ENCODE measurements at regions of chrX and their contacts with region 1.

Region 1: GRCh38 chrX:31136144-31136611 is 64.3 kb upstream of the FTHL17 start:
- DNase-seq: peak; percentile 88
- H3K4me3 ChIP-seq: peak overlapping the region; percentile 54
- H3K27ac ChIP-seq: peak overlapping the region; percentile 100
- H3K4me1 ChIP-seq: peaks cover 44% of the 10 kb centered on the region
- CTCF ChIP-seq: no peak

Region 2: GRCh38 chrX:31099536-31100090 is 36.6 kb before region 1 on chrX:
- CTCF ChIA-PET with region 1: no interaction called
- POLR2A ChIA-PET with region 1: no interaction called
- intact Hi-C with region 1: no loop called
- DNase-seq: no peak
- H3K4me3 ChIP-seq: no peak overlapping the region
- H3K27ac ChIP-seq: no peak overlapping the region
- H3K4me1 ChIP-seq: no peaks in the 10 kb centered on the region
- CTCF ChIP-seq: no peak

Region 3: GRCh38 chrX:31178064-31178768 is 42.0 kb after region 1 on chrX:
- CTCF ChIA-PET with region 1: no interaction called
- POLR2A ChIA-PET with region 1: interaction called, 8 read pairs
- intact Hi-C with region 1: loop called (anchors 2 kb)
- DNase-seq: peak; percentile 28
- H3K4me3 ChIP-seq: no peak overlapping the region
- H3K27ac ChIP-seq: peak overlapping the region; percentile 67
- H3K4me1 ChIP-seq: peaks cover 60% of the 10 kb centered on the region
- CTCF ChIP-seq: no peak

Region 4: GRCh38 chrX:31217084-31217483 is 80.9 kb after region 1 on chrX:
- CTCF ChIA-PET with region 1: no interaction called
- POLR2A ChIA-PET with region 1: no interaction called
- intact Hi-C with region 1: no loop called
- DNase-seq: no peak
- H3K4me3 ChIP-seq: no peak overlapping the region
- H3K27ac ChIP-seq: peak overlapping the region; percentile 53
- H3K4me1 ChIP-seq: peaks cover 37% of the 10 kb centered on the region
- CTCF ChIP-seq: no peak

Region 5: DNA sequence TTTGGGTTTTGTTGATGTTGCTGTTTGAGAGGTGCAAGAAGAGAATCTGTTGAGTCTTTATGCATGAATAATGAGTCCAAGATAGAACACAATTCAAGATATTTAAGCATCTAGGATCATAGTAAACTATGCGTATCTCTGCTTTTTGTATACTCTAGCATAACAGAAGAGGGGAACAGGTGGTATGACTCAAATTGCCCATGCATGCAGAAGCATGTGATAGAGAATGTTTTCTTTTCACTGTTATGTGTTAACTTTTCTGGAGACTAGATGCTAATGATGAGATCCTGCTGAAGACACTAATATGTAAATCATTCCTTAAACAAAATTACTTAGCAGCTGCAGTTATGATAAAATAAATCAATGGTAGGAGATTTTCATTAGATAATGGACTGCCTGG is 101.0 kb after region 1 on chrX:
- CTCF ChIA-PET with region 1: no interaction called
- POLR2A ChIA-PET with region 1: interaction called, 4 read pairs
- intact Hi-C with region 1: loop called (anchors 10 kb)
- DNase-seq: peak; percentile 41
- H3K4me3 ChIP-seq: peak overlapping the region; percentile 43
- H3K27ac ChIP-seq: peak overlapping the region; percentile 90
- H3K4me1 ChIP-seq: peaks cover 99% of the 10 kb centered on the region
- CTCF ChIP-seq: no peak